Activated T-helper 2 cell treated with anti-CD3 and anti-CD28 coated beads, Interferon-gamma antibody, Interleukin-2, Interleukin-4, amounts not matched to agents 10 μg/mL and 5 μg/mL and 100 μg/mL, durations not matched to agents 14 hours and 24 hours and 36 hours (primary cell): ENCODE measurements at regions of chr3 and their contacts with region 1.

Region 1: GRCh38 chr3:10205451-10206165 is 40.9 kb downstream of the IRAK2 start:
- DNase-seq: no peak
- H3K4me3 Mint-ChIP-seq: no peak overlapping the region
- H3K27ac Mint-ChIP-seq: peak overlapping the region; percentile 21
- H3K4me1 Mint-ChIP-seq: peaks cover 39% of the 10 kb centered on the region
- H3K27me3 Mint-ChIP-seq: no peaks in the 10 kb centered on the region

Region 2: GRCh38 chr3:10099041-10099440 is 106.6 kb before region 1 on chr3:
- intact Hi-C with region 1: no loop called
- DNase-seq: no peak
- H3K4me3 Mint-ChIP-seq: no peak overlapping the region
- H3K27ac Mint-ChIP-seq: no peak overlapping the region
- H3K4me1 Mint-ChIP-seq: no peaks in the 10 kb centered on the region
- H3K27me3 Mint-ChIP-seq: no peaks in the 10 kb centered on the region

Region 3: GRCh38 chr3:10137151-10137550 is 68.5 kb before region 1 on chr3:
- intact Hi-C with region 1: no loop called
- DNase-seq: no peak
- H3K4me3 Mint-ChIP-seq: no peak overlapping the region
- H3K27ac Mint-ChIP-seq: no peak overlapping the region
- H3K4me1 Mint-ChIP-seq: peaks cover 14% of the 10 kb centered on the region
- H3K27me3 Mint-ChIP-seq: no peaks in the 10 kb centered on the region

Region 4: DNA sequence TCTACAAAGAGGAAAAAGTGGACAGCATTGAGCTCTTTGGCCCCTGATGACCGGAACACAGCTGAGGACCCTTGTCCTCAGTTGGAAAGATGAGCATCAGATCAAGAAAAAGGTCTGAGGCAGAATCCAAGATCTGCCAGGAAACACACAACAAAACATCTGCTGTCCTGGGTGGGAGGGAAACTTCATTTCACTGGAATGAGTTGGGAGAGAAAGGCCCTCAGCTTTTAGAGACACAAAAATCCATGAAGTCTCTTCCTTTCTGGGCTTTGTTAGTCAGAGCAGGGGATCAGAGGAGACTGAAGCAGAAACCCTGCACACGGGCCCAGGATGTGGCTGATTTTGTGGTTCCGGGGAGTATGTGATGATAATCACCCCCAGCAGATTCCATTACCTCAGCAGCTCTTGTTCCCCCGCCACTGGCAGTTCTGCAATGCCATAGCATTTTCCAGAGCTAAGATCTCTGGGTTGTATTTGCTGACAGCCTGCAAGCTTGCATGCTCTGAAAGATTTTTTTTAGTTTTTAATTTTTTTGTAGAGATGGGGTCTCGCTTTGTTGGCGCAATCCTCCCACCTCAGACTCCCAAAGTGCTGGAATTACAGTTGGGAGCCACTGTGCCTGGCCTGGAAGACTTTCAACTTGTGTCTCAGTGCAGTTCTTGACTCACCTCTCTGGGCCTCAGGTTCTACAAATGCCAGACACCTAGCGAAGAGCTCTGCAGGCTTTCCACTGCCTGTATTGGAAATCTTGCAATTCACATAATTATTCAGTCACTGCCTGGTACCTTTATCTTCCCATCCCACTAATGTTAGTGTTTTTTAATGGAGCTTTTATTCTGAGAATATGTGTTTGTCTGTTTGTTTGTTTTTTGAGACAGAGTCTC is 36.8 kb after region 1 on chr3:
- intact Hi-C with region 1: loop called (anchors 2 kb)
- DNase-seq: peak; percentile 85
- H3K4me3 Mint-ChIP-seq: peak overlapping the region; percentile 55
- H3K27ac Mint-ChIP-seq: peak overlapping the region; percentile 97
- H3K4me1 Mint-ChIP-seq: peaks cover 53% of the 10 kb centered on the region
- H3K27me3 Mint-ChIP-seq: no peaks in the 10 kb centered on the region

Region 5: DNA sequence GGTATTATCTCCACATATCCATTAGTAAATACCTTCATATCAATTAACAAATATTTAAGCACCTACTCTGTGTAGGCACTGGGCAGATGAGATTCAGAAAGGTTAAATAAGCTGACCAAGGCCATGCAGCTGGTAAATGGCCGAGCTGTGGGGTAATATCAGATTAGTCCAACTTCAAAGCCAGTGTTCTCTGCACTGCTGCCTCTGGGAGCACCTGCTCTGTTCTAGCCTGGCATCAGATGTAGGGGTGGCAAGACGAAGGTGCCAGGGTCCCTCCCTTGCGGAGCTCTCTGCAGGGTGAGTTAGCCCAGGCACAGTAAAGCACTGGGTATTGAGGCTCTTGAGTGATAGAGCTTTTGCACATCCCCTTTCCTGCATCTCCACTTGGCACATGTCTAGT is 48.1 kb after region 1 on chr3:
- intact Hi-C with region 1: no loop called
- DNase-seq: no peak
- H3K4me3 Mint-ChIP-seq: no peak overlapping the region
- H3K27ac Mint-ChIP-seq: peak overlapping the region; percentile 69
- H3K4me1 Mint-ChIP-seq: peaks cover 48% of the 10 kb centered on the region
- H3K27me3 Mint-ChIP-seq: no peaks in the 10 kb centered on the region

Region 6: GRCh38 chr3:10471054-10471688 is 265.6 kb after region 1 on chr3:
- intact Hi-C with region 1: no loop called
- DNase-seq: no peak
- H3K4me3 Mint-ChIP-seq: no peak overlapping the region
- H3K27ac Mint-ChIP-seq: no peak overlapping the region
- H3K4me1 Mint-ChIP-seq: peaks cover 1% of the 10 kb centered on the region
- H3K27me3 Mint-ChIP-seq: peaks cover 3% of the 10 kb centered on the region